Activated CD4-positive, alpha-beta memory T cell treated with anti-CD3 and anti-CD28 coated beads, Interleukin-2, amount 10 ng/mL, durations not matched to agents 7 days and 5 days (primary cell): ENCODE measurements at regions of chr19 and their contacts with region 1.

Region 1: DNA sequence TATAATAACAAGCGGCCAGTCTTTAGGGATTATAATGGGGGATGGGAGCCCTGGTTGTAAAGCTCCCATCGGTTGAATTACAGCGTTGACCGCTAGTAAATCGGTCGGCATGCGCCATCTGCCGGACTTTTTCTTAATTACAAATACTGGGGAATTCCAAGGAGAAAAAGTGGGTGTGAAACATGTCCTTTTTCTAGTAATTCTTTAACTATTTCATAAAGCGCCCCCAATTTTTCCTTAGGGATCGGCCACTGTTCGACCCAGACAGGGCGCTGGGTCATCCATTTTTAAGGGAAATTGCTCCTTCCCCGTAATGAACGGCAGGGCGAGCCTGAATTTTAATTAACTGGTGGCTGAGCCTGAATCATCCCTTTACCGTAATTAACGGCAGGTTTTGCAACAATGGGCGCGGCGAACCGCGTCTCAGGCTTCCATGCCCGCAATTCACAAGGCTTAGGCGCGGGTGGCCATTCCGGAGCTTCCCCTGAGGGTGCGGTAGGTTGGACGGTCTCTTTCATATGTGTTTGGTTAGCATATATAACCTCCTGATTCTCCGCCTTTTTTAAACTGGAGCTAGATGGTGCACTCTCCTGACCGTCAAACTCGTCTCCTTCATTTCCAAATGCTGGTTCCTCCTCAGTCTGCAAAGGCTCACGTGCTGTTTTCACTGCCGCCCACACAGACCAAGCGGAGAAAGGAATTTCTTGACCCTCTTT is 30.2 kb upstream of the EVI5L start:
- DNase-seq: peak; percentile 61
- H3K4me3 Mint-ChIP-seq: no peak overlapping the region
- H3K27ac Mint-ChIP-seq: no peak overlapping the region
- H3K4me1 Mint-ChIP-seq: peaks cover 1% of the 10 kb centered on the region
- H3K27me3 Mint-ChIP-seq: peaks cover 51% of the 10 kb centered on the region

Region 2: GRCh38 chr19:7652061-7652641 is 147.6 kb before region 1 on chr19:
- CTCF ChIA-PET with region 1: interaction called, 15 read pairs
- POLR2A ChIA-PET with region 1: interaction called, 3 read pairs
- DNase-seq: peak; percentile 88
- H3K4me3 Mint-ChIP-seq: peak overlapping the region; percentile 53
- H3K27ac Mint-ChIP-seq: peak overlapping the region; percentile 41
- H3K4me1 Mint-ChIP-seq: peaks cover 12% of the 10 kb centered on the region
- H3K27me3 Mint-ChIP-seq: no peaks in the 10 kb centered on the region

Region 3: DNA sequence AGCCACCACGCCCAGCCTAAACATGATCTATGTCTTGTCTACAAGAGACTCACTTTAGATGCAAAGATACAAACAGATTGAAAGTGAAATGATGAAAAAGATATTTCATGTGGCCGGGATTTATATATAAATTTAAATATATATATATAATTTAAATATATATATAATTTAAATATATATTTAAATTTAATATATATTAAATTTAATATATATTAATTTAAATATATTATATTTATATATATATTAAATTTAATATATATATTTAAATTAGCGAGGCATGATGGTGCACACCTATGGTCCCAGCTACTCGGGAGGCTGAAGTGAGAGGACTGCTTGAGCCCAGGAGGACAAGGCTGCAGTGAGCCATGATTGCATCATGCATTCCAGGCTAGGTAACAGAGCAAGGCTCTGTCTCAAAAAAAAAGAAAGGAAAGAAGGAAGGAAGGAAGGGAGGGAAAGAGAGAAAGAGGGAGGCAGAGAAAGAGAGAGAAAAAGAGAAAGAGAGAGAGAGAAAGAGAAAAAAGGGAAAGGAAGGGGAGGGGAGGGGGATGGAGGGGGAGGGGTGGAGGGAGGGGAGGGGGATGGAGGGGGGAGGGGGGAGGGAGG is 23.2 kb after region 1 on chr19:
- CTCF ChIA-PET with region 1: no interaction called
- POLR2A ChIA-PET with region 1: no interaction called
- DNase-seq: no peak
- H3K4me3 Mint-ChIP-seq: no peak overlapping the region
- H3K27ac Mint-ChIP-seq: no peak overlapping the region
- H3K4me1 Mint-ChIP-seq: no peaks in the 10 kb centered on the region
- H3K27me3 Mint-ChIP-seq: peaks cover 34% of the 10 kb centered on the region